Panc1 (cell line): ENCODE measurements at regions of chr16 and their contacts with region 1.

Region 1: DNA sequence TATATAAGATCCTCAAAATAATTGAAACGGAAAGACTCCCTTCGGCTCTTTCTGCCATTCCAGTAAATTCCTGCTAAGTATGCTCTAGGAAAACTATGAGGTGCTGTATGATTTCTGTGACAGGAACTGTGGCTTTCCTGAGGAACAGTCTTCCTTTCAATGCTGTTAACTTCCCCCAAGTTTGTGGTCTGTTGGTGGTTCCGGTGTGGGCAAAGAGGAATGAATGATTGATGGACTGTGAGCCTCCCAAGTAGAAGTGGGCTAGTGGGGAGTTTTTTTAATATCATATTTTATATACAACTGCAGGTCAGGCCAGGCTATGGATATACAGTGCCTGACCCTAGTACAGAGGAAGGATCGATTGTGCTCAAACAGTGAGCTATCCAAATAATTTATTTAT is 560.7 kb upstream of the RBFOX1 start:
- DNase-seq: no peak
- ATAC-seq: no peak
- H3K4me3 ChIP-seq: no peak overlapping the region
- H3K27ac ChIP-seq: no peak overlapping the region
- H3K4me1 ChIP-seq: no peaks in the 10 kb centered on the region
- H3K27me3 ChIP-seq: no peaks in the 10 kb centered on the region
- CTCF ChIP-seq: no peak

Region 2: GRCh38 chr16:6345090-6345489 is 426.9 kb before region 1 on chr16:
- CTCF ChIA-PET with region 1: no interaction called
- POLR2A ChIA-PET with region 1: no interaction called
- in situ Hi-C with region 1: no loop called
- intact Hi-C with region 1: no loop called
- DNase-seq: no peak
- ATAC-seq: no peak
- H3K4me3 ChIP-seq: no peak overlapping the region
- H3K27ac ChIP-seq: no peak overlapping the region
- H3K4me1 ChIP-seq: no peaks in the 10 kb centered on the region
- H3K27me3 ChIP-seq: 0 out of 2 replicates have a peak, but pooled peaks cover 3% of the 10 kb centered on the region
- CTCF ChIP-seq: peak; percentile 45

Region 3: GRCh38 chr16:6827267-6827666 is 55.3 kb after region 1 on chr16:
- CTCF ChIA-PET with region 1: no interaction called
- POLR2A ChIA-PET with region 1: no interaction called
- in situ Hi-C with region 1: no loop called
- intact Hi-C with region 1: loop called (anchors 10 kb)
- DNase-seq: no peak
- ATAC-seq: no peak
- H3K4me3 ChIP-seq: no peak overlapping the region
- H3K27ac ChIP-seq: no peak overlapping the region
- H3K4me1 ChIP-seq: no peaks in the 10 kb centered on the region
- H3K27me3 ChIP-seq: no peaks in the 10 kb centered on the region
- CTCF ChIP-seq: no peak